ENCODE measurements at regions of chr14 and their contacts with region 1.

Region 1: DNA sequence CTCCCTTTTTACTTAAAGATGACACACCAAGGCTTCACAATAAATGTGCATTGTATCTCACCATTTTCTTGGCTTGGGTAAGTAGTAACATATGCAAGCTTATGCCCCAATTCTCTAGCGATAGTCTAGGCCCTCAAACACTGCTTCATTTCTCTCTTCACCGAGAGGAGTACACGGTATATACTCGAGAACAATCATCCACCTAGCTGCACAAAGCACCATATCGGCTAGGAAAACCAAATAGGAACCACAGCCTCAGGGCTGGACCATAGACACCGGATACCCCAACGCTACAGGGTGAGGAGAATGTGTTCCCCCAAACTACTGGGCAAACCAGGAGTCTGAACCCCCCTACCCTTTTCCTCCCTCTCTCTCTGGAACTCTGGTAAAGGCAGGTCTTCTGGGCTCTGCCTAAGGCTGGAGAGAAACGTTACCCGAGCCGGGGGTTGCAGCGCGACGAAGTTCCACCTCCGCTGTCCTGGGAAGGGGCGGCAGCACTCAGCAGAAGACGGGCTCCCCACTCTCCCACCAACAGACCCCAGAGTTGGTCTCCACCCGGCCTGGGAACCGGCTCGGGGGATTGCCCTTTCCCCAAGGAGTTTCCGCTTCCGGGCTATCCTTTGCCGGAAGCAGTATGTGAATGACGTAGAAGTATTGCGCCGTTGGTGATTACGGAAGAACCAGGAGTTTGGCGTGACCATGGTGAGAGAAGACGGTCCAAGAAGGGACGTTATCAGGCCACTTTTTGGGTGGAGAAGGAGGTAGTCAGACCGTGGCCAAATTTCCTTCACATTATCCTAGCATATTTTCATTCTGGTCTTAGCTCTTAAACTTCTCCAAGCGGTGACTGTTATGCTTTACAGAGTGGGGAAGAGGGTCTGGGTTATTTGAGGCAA is at the starts of genes AREL1 and FCF1:
- DNase-seq: peak; percentile 84 to 89
- ATAC-seq: peak; percentile 95
- H3K4me3 ChIP-seq: peak within 1 kb of the TSS; percentile 72 to 91
- H3K27ac ChIP-seq: peak within 1 kb of the TSS; percentile 2 to 34
- H3K4me1 ChIP-seq: no peaks in the 10 kb centered on the region
- H3K27me3 ChIP-seq: no peaks in the 10 kb centered on the region
- total RNA-seq, gene AREL1: 32.7 to 35.7 TPM
- total RNA-seq, gene FCF1: 40.8 to 42.4 TPM

Region 2: DNA sequence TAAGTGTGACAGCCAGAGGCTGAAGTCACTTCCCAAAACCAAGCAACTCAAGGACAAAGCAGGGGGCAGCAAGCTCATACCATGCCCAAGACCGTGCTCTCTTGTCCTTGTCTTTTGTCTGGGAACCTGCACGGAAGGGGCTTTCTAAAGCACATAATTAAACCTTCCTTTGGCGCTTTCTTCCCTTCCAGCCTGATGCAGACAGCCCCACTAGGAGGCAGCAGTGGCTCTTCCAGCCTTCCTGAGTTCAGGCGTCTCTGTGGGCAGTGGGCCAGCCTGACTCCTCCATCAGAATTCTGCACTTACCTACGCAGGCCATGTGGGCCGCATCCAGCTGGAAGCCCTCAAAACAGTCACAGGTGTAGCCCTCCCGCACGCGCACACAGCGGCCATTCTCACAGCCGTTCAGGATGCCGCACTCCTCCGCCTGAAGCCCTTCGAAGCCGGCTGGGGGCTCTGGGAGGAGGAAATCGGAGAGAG is 211.6 kb before region 1 on chr14:
- intact Hi-C with region 1: loop called (anchors 5 to 10 kb)
- DNase-seq: peak; percentile 84 to 94
- ATAC-seq: peak; percentile 60
- H3K4me3 ChIP-seq: no peak overlapping the region
- H3K27ac ChIP-seq: peak overlapping the region in 1 of 2 donors; percentile 24
- H3K4me1 ChIP-seq: no peaks in the 10 kb centered on the region
- H3K27me3 ChIP-seq: no peaks in the 10 kb centered on the region

Region 3: DNA sequence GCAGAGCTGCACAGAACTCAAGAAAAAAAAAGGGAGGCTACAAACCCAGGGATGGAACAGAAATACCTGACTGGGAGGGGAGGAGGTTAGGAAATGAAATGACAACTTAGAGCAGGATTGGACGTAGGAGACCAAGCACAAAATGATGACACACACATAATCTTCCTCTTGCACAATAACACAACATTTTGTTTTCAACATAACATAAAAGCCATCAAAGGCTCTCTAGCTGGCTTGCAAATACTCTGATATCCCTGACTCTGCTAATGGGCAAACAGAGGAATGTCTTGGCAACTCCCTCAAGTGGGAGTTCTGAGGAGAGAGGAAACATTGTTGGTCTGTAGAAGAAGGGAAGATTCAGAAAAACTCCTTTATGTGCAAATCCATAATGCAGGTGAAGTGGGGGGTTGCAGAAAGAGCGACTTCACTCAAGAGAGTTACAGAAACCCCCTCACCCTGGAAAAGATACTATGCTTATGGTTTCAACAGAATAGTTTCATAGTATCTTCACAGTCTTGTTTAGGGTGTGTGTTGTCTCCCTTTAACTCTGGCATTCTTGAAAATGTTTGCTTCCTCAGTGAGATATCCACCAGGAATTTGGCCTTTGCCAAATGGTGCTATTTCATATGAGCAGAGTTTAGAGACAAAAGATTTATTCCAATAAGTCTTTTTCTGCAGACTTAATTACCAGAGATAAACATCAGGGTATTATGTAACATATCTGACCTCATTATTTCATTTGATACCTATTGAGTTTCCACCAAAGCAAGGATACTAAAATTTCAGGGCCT is 57.0 kb before region 1 on chr14:
- intact Hi-C with region 1: no loop called
- DNase-seq: no peak
- ATAC-seq: no peak
- H3K4me3 ChIP-seq: no peak overlapping the region
- H3K27ac ChIP-seq: no peak overlapping the region
- H3K4me1 ChIP-seq: peaks cover 5 to 15% of the 10 kb centered on the region in 2 donors
- H3K27me3 ChIP-seq: no peaks in the 10 kb centered on the region

Region 4: DNA sequence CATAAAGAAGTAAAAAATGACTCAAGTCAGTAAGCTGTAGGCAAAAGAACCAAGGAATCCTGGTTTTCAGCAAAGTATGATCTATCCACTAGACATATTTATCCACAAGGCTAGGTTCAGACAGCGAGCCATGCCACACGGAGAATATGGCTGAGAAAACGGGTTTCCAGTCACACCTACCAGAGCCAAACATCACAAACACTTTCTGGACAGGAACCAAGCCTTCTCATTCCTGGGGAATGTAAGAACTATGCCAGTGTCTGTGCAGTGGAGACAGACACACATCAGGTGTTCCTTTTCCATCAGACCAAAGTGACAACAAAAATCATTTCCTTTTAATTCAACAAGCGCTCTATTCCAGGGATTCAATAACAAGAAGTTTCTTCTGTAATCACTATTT is 41.0 kb before region 1 on chr14:
- intact Hi-C with region 1: loop called in 1 of 2 experiments (anchors 5 kb)
- DNase-seq: peak in 1 of 2 donors; percentile 68
- ATAC-seq: peak; percentile 66
- H3K4me3 ChIP-seq: no peak overlapping the region
- H3K27ac ChIP-seq: peak overlapping the region; percentile 28 to 69
- H3K4me1 ChIP-seq: no peaks in the 10 kb centered on the region
- H3K27me3 ChIP-seq: no peaks in the 10 kb centered on the region

Measured in aorta (tissue), 5 donors.